ENCODE measurements at regions of chr5 and their contacts with region 1.

Region 1: DNA sequence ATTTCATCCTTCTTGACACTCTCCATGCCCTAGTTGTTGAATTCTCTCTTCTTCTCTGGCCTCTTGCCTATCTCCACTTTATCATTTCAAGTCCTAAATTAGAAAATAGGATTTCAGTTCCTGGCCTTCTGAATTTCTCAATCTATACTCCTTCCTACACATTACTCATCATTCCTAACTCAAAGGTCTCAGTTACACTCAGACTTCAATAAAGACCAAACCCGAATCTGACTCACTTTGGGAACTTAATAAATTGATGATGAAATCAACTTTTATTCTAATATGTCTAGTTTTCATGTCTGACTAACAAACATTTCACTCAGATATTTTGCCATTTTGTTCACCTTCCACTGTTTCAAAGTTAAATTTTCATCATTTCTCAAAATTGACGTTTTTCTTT is 113.6 kb upstream of the TSLP start:
- DNase-seq: no peak

Region 2: GRCh38 chr5:110817437-110817836 is 140.5 kb before region 1 on chr5:
- intact Hi-C with region 1: loop called in 1 of 2 experiments (anchors 5 kb)
- DNase-seq: no peak

Measured in posterior vena cava (tissue), 2 donors.